CD4-positive, alpha-beta T cell (primary cell): ENCODE measurements at regions of chr16 and their contacts with region 1.

Region 1: DNA sequence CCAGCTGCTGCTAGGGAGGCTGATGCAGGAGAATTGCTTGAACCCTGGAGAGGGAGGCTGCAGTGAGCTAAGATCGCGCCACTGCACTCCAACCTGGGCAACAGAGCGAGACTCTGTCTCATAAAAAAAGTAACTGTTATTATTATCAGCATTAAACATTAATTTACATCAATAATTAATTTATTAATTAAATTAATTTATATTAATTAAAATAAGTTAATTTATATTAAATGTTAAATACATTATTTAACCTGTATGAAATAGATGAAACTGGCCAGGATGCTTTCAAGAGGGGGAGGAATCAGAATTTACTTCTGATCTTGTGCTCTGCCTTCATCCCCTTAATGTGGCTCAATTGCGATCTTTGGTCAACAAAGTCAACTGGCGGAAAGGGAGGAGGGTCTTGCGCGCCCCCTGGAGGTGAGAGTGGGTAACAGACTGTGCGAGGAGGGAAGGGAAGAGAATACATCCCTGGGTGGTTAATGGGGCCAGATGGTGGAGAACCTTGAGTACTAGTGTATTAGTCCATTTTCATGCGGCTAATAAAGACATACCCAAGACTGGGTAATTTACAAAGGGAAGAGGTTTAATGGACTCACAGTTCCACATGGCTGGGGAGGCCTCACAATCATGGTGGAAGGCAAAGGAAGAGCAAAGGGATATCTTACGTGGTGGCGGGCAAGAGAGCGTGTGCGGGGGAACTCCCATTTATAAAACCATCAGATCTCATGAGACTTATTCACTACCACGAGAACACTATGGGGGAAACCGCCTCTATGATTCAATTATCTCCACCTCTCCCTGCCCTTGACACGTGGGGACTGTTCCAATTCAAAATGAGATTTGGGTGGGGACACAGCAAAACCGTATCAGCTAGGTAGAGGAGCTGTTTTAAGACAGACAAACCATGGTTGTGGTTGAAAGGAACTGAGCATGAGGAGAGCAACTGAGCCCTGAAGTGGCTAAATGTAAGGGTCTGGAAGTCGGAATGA is 15.7 kb upstream of the CPPED1 start:
- DNase-seq: peak; percentile 42 to 83 (median 70)
- ATAC-seq: peak; percentile 66
- H3K4me3 ChIP-seq: no peak overlapping the region
- H3K4me3 Mint-ChIP-seq: no peak overlapping the region
- H3K27ac ChIP-seq: no peak overlapping the region
- H3K27ac Mint-ChIP-seq: no peak overlapping the region
- H3K4me1 ChIP-seq: peaks cover 2% of the 10 kb centered on the region
- H3K4me1 Mint-ChIP-seq: no peaks in the 10 kb centered on the region
- H3K27me3 ChIP-seq: no peaks in the 10 kb centered on the region
- H3K27me3 Mint-ChIP-seq: no peaks in the 10 kb centered on the region
- CTCF ChIP-seq: peak; percentile 81

Region 2: GRCh38 chr16:12095275-12096156 is 723.9 kb before region 1 on chr16:
- CTCF ChIA-PET with region 1: interaction called, 4 read pairs
- POLR2A ChIA-PET with region 1: no interaction called
- intact Hi-C with region 1: loop called in 1 of 2 experiments (anchors 1 kb)
- DNase-seq: peak; percentile 48 to 83 (median 60)
- ATAC-seq: peak; percentile 54
- H3K4me3 ChIP-seq: no peak overlapping the region
- H3K4me3 Mint-ChIP-seq: peak overlapping the region; percentile 77
- H3K27ac ChIP-seq: no peak overlapping the region
- H3K27ac Mint-ChIP-seq: no peak overlapping the region
- H3K4me1 ChIP-seq: peaks cover 14% of the 10 kb centered on the region
- H3K4me1 Mint-ChIP-seq: peaks cover 50% of the 10 kb centered on the region
- H3K27me3 ChIP-seq: no peaks in the 10 kb centered on the region
- H3K27me3 Mint-ChIP-seq: no peaks in the 10 kb centered on the region
- CTCF ChIP-seq: peak; percentile 94

Region 3: DNA sequence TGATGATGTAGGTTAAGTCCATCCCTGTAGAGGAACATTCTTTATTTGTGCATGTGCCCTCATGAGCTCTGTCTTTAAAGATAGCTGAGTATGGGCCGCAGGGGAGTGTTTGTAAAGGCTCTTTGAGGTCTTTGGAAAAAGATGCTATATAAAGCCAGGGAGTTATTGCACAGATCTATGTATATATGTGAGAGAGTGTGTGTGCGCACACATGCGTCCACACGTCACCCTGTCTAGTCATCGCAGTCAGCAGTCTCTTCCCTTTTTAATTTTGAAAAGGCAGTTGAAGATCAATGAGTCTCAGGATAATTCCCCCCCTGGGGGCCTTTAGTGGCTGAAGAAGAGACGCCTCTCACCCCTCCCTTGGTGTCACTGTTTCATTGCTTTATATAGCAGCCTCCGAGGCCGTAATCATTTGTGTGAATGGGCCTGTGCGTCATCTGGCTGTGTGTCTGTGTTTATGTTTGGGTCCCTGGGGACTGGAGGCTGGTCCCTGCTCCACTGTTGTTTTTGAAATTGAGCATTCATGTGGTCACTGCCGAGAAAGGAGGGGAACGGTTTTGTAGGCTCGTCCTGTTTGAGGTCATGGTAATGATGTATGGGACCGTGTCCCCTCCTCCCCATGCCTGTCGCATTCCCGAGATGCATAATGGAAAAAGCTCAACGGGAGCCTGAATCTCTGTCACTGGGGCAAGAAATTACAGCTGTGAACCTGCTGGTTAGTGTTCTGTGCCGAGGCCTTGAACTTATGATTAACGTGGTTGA is 699.0 kb before region 1 on chr16:
- CTCF ChIA-PET with region 1: no interaction called
- POLR2A ChIA-PET with region 1: no interaction called
- intact Hi-C with region 1: no loop called
- DNase-seq: no peak
- ATAC-seq: no peak
- H3K4me3 ChIP-seq: no peak overlapping the region
- H3K4me3 Mint-ChIP-seq: no peak overlapping the region
- H3K27ac ChIP-seq: no peak overlapping the region
- H3K27ac Mint-ChIP-seq: no peak overlapping the region
- H3K4me1 ChIP-seq: no peaks in the 10 kb centered on the region
- H3K4me1 Mint-ChIP-seq: peaks cover 37% of the 10 kb centered on the region
- H3K27me3 ChIP-seq: no peaks in the 10 kb centered on the region
- H3K27me3 Mint-ChIP-seq: no peaks in the 10 kb centered on the region
- CTCF ChIP-seq: no peak

Region 4: GRCh38 chr16:12340151-12340733 is 479.2 kb before region 1 on chr16:
- CTCF ChIA-PET with region 1: no interaction called
- POLR2A ChIA-PET with region 1: no interaction called
- intact Hi-C with region 1: loop called in 1 of 2 experiments (anchors 5 kb)
- DNase-seq: peak in 6 of 14 experiments; percentile 6 to 41 (median 26)
- ATAC-seq: no peak
- H3K4me3 ChIP-seq: no peak overlapping the region
- H3K4me3 Mint-ChIP-seq: no peak overlapping the region
- H3K27ac ChIP-seq: no peak overlapping the region
- H3K27ac Mint-ChIP-seq: no peak overlapping the region
- H3K4me1 ChIP-seq: no peaks in the 10 kb centered on the region
- H3K4me1 Mint-ChIP-seq: peaks cover 11% of the 10 kb centered on the region
- H3K27me3 ChIP-seq: no peaks in the 10 kb centered on the region
- H3K27me3 Mint-ChIP-seq: no peaks in the 10 kb centered on the region
- CTCF ChIP-seq: peak; percentile 31

Region 5: DNA sequence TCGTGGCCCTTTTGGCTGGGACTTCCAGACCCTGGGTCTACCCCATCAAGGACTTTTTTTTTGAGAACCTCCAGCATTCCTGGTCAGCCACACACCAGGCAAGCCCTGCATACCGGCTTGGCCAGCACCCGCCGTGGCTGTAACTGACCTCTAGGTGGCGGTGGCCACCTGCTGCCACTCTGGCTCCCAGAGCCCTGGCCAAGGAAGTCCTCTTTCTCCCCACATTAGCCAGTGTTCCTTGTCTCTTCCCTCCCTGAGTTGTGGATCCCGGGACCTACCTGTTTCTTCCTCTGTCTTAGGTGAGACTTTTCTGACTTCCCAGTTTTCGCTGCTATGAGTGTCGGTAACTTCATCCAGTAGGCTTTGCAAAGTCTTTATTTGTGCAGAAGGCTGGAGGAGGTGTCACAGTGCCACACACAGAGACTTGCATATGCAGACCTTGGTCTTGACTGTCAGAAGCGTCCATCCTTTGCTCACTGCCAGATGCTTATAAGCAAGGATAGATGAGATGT is 364.1 kb before region 1 on chr16:
- CTCF ChIA-PET with region 1: no interaction called
- POLR2A ChIA-PET with region 1: no interaction called
- intact Hi-C with region 1: loop called in 1 of 2 experiments (anchors 1 kb)
- DNase-seq: peak in 10 of 14 experiments; percentile 2 to 52 (median 23)
- ATAC-seq: no peak
- H3K4me3 ChIP-seq: no peak overlapping the region
- H3K4me3 Mint-ChIP-seq: no peak overlapping the region
- H3K27ac ChIP-seq: no peak overlapping the region
- H3K27ac Mint-ChIP-seq: no peak overlapping the region
- H3K4me1 ChIP-seq: peaks cover 13% of the 10 kb centered on the region
- H3K4me1 Mint-ChIP-seq: peaks cover 32% of the 10 kb centered on the region
- H3K27me3 ChIP-seq: no peaks in the 10 kb centered on the region
- H3K27me3 Mint-ChIP-seq: no peaks in the 10 kb centered on the region
- CTCF ChIP-seq: peak; percentile 39

Region 6: DNA sequence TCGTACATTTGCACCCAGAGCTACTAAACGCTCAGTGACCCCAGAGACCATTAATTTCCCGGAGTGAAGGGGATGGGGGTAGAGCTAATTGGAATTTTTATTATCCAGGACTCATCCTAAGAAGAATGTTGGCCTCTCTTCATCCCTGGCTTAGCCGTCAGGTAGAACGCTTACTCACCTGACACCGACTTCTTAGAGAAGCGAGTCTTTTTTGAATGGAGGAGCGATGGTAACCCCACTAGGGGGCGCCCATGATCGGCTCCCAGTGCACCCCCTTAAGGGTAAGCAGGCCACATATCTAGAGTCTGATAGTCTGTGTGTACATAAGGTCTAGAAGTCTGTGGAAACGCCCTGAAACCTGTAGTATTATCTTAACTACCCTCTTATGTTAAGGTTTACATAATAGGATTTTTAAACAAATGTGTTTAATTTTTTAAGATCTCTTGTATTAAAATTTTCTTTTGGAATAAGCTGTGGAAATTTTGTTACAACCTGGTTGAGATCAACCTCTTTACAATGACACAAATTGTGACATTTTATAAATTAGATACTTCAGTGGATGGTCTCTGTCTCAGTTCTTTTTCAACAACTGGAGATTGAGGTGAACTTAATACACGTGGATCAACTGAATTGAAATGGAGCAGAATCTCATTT is 245.6 kb before region 1 on chr16:
- CTCF ChIA-PET with region 1: no interaction called
- POLR2A ChIA-PET with region 1: no interaction called
- intact Hi-C with region 1: loop called (anchors 1 to 2 kb)
- DNase-seq: peak in 13 of 14 experiments; percentile 10 to 65 (median 44)
- ATAC-seq: peak; percentile 44
- H3K4me3 ChIP-seq: no peak overlapping the region
- H3K4me3 Mint-ChIP-seq: no peak overlapping the region
- H3K27ac ChIP-seq: no peak overlapping the region
- H3K27ac Mint-ChIP-seq: no peak overlapping the region
- H3K4me1 ChIP-seq: no peaks in the 10 kb centered on the region
- H3K4me1 Mint-ChIP-seq: peaks cover 13% of the 10 kb centered on the region
- H3K27me3 ChIP-seq: no peaks in the 10 kb centered on the region
- H3K27me3 Mint-ChIP-seq: no peaks in the 10 kb centered on the region
- CTCF ChIP-seq: peak; percentile 59

Region 7: GRCh38 chr16:12721841-12722421 is 97.5 kb before region 1 on chr16:
- CTCF ChIA-PET with region 1: no interaction called
- POLR2A ChIA-PET with region 1: no interaction called
- intact Hi-C with region 1: no loop called
- DNase-seq: no peak
- ATAC-seq: no peak
- H3K4me3 ChIP-seq: no peak overlapping the region
- H3K4me3 Mint-ChIP-seq: no peak overlapping the region
- H3K27ac ChIP-seq: no peak overlapping the region
- H3K27ac Mint-ChIP-seq: no peak overlapping the region
- H3K4me1 ChIP-seq: no peaks in the 10 kb centered on the region
- H3K4me1 Mint-ChIP-seq: no peaks in the 10 kb centered on the region
- H3K27me3 ChIP-seq: no peaks in the 10 kb centered on the region
- H3K27me3 Mint-ChIP-seq: no peaks in the 10 kb centered on the region
- CTCF ChIP-seq: no peak